Activated CD4-positive, alpha-beta memory T cell treated with anti-CD3 and anti-CD28 coated beads for 36 hours (primary cell): ENCODE measurements at regions of chr15 and their contacts with region 1.

Region 1: GRCh38 chr15:26475554-26475953 is 297.3 kb downstream of the GABRB3 start:
- DNase-seq: no peak
- H3K4me3 Mint-ChIP-seq: no peak overlapping the region
- H3K27ac Mint-ChIP-seq: no peak overlapping the region
- H3K4me1 Mint-ChIP-seq: no peaks in the 10 kb centered on the region
- H3K27me3 Mint-ChIP-seq: no peaks in the 10 kb centered on the region

Region 2: DNA sequence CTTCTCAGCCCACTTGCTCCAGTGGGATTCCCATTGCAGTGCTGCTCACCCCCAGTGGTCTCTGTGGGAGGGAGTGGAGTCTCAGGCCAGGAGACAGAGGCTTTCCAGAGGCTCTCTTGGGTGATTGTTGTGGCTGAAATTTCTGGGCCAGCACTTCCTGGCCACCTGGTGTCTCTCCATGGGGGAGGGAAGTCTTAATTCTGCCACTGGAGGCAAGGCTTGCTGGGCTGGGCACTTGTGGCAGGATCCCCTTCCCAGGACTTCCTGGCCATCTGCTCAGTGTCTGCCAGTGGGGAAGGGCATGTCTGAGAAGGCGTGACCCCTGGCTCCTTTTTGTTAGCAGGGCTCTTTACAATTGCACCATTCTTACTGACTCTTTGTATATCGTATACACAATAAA is 54.5 kb before region 1 on chr15:
- CTCF ChIA-PET with region 1: no interaction called
- POLR2A ChIA-PET with region 1: no interaction called
- intact Hi-C with region 1: loop called (anchors 10 kb)
- DNase-seq: no peak
- H3K4me3 Mint-ChIP-seq: no peak overlapping the region
- H3K27ac Mint-ChIP-seq: no peak overlapping the region
- H3K4me1 Mint-ChIP-seq: no peaks in the 10 kb centered on the region
- H3K27me3 Mint-ChIP-seq: no peaks in the 10 kb centered on the region

Region 3: GRCh38 chr15:26537663-26538062 is 62.1 kb after region 1 on chr15:
- CTCF ChIA-PET with region 1: no interaction called
- POLR2A ChIA-PET with region 1: no interaction called
- intact Hi-C with region 1: loop called (anchors 10 kb)
- DNase-seq: no peak
- H3K4me3 Mint-ChIP-seq: no peak overlapping the region
- H3K27ac Mint-ChIP-seq: no peak overlapping the region
- H3K4me1 Mint-ChIP-seq: no peaks in the 10 kb centered on the region
- H3K27me3 Mint-ChIP-seq: no peaks in the 10 kb centered on the region

Region 4: DNA sequence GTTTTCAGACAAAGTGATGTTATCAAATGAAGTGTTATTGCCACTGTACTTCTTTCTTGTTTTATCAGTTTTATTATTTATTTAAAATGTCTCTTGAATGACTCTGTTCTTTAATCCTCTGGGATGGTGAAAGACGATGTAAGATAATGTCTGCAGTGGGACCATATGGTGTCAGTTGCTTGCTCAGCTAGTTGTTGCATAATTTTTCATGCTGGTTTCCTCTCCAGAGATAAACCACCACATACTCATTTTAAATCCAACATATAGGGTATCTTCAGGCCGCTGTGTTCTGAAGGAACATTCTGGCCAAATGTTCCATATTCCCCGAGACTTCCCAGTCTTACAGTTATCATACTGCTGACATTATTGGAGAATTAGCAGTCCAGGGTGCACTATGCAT is 571.3 kb after region 1 on chr15:
- CTCF ChIA-PET with region 1: no interaction called
- POLR2A ChIA-PET with region 1: no interaction called
- intact Hi-C with region 1: no loop called
- DNase-seq: no peak
- H3K4me3 Mint-ChIP-seq: no peak overlapping the region
- H3K27ac Mint-ChIP-seq: no peak overlapping the region
- H3K4me1 Mint-ChIP-seq: no peaks in the 10 kb centered on the region
- H3K27me3 Mint-ChIP-seq: no peaks in the 10 kb centered on the region